Right ventricle myocardium superior (tissue), 1 donor: ENCODE measurements at regions of chr2 and their contacts with region 1.

Region 1: DNA sequence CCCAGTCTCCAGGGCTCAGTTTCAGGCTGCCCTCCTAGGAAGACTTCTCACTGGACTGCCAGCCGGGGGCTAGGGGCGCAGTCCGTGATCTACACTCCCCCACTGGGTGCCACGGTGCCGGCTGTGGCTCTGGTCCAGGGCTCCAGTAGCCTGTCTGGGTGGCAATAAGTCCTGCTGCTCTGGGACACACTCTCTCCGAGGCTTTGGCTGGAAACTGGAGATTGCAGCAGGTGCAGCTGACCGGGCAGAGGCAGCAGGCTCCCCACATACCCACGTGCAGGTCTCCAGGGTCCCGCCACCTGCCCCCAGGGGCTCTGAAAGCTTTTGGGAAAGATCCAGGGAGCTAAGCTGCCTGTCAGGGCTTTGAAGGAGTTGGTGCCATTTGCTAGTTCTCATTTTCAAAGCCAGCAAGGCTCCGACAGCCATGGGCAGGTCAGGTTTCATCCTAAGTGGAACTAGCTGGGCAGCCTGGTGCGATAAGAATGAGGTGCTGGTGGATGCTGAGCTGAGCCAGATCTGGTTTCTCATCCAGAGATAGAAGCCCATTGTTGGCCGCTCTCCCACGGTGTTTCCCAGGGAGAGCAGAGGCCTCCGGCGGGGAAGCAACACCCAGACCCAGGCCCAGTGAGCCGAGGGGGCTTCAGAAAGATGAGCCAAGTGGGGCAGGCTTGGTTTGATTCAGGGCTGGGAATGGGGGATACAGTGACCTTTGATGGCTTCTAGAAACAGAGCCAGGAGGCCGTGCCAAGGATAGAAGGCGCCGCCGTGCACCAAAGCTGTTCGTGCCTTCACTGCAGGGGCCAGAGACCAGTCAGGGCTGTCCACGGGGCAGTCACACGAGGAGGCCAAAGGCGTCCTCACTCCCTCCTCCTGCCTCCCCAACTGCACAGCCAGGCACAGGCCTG is 141.7 kb upstream of the GPC1 start:
- DNase-seq: peak; percentile 77
- ATAC-seq: peak; percentile 75

Region 2: GRCh38 chr2:240369801-240370585 is 76.2 kb after region 1 on chr2:
- intact Hi-C with region 1: loop called (anchors 2 kb)
- DNase-seq: peak; percentile 82
- ATAC-seq: peak; percentile 80

Region 3: DNA sequence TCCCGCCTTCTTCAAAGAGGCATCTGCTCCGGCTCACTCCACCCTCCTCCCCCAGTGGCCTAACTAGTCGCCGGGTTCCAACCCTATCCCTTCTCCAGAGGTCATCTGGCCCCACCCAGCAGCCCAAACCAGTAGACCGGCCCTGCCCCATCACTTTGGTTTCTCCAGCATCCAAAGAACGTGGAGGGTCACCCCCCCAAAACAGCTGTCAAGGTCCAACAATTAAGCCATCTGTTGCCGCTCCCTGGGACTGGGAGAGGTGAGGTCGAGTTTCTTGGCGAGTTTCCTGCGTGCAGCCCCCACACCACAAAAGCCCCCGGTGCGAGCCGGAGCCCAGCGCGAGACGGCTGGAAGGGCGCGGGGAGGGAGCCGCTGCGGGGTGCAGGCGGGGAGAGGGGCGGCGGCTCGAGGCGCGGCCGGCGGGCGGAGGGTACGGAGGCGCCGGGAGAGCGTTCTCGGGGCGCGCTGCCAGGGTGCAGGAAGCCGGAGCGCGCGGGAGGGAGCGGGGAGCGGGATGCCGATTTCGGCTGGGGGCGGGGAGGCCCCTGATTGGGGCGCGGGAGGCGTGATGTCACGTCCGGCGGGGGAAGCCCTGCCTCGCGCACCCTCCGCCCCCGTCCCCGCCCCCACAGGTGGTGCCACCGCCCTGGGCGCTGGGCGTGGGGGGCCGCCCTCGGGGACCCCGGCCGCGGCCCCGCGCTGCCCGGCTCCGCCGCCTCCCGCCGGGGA is 141.1 kb after region 1 on chr2:
- intact Hi-C with region 1: loop called (anchors 10 kb)
- DNase-seq: peak; percentile 95
- ATAC-seq: peak; percentile 80

Region 4: GRCh38 chr2:240509667-240510512 is 216.1 kb after region 1 on chr2:
- intact Hi-C with region 1: no loop called
- DNase-seq: no peak
- ATAC-seq: no peak